Ascending aorta (tissue), 2 donors: ENCODE measurements at regions of chr3 and their contacts with region 1.

Region 1: GRCh38 chr3:100260685-100261484 is at the start of gene TBC1D23:
- DNase-seq: peak; percentile 97 to 99
- H3K4me3 ChIP-seq: peak within 1 kb of the TSS; percentile 80 to 88
- H3K27ac ChIP-seq: peak within 1 kb of the TSS; percentile 95 to 97
- H3K4me1 ChIP-seq: peaks cover 3 to 14% of the 10 kb centered on the region in 2 donors
- H3K27me3 ChIP-seq: no peaks in the 10 kb centered on the region
- CTCF ChIP-seq: no peak
- total RNA-seq, gene TBC1D23: 56.9 TPM

Region 2: DNA sequence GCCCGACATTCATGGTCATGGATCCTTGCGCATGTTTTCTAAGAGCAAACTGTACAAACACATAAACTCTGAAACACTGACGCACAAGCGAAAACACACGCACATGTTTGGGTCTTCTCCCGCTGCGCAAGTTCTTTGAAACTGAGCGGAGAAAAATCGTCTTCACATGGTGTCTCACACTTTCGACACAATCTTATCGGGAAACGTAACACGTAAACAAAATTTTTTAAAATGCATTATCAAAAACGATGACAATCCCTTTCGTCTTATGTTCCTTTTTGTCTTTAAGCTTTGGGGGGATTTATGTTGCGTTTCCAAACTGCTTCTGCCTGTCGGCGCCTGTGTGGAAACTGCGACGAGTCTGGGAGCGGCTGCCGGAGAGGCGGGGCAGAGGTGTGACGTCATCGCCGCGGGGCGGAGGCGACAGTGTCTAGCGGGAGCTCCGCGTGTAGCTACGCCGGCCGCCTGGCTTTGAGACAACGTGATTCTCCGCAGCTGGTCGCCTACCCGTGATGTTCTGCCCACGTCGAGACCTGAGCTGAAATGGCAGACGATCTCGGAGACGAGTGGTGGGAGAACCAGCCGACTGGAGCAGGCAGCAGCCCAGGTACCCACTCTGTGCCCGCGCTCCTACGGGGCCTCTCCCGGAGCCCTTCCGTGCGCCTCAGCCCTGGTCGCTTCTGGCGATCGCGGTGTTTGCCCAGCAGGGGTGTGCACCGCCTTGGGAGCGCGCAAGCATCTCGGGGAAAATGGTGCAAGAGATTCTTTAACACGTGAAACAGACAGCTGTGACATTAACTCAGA is 443.2 kb before region 1 on chr3 and contains the start of gene CMSS1:
- intact Hi-C with region 1: loop called (anchors 5 kb)
- DNase-seq: peak; percentile 55 to 96
- H3K4me3 ChIP-seq: peak within 1 kb of the TSS; percentile 71 to 79
- H3K27ac ChIP-seq: peak within 1 kb of the TSS; percentile 90
- H3K4me1 ChIP-seq: peaks cover 0 to 19% of the 10 kb centered on the region in 2 donors
- H3K27me3 ChIP-seq: no peaks in the 10 kb centered on the region
- CTCF ChIP-seq: peak; percentile 15 to 52 (median 38)
- total RNA-seq, gene CMSS1: 9.2 TPM

Region 3: GRCh38 chr3:100352296-100353231 is 91.7 kb after region 1 on chr3:
- intact Hi-C with region 1: no loop called
- DNase-seq: no peak
- H3K4me3 ChIP-seq: no peak overlapping the region
- H3K27ac ChIP-seq: no peak overlapping the region
- H3K4me1 ChIP-seq: no peaks in the 10 kb centered on the region
- H3K27me3 ChIP-seq: no peaks in the 10 kb centered on the region
- CTCF ChIP-seq: no peak

Region 4: DNA sequence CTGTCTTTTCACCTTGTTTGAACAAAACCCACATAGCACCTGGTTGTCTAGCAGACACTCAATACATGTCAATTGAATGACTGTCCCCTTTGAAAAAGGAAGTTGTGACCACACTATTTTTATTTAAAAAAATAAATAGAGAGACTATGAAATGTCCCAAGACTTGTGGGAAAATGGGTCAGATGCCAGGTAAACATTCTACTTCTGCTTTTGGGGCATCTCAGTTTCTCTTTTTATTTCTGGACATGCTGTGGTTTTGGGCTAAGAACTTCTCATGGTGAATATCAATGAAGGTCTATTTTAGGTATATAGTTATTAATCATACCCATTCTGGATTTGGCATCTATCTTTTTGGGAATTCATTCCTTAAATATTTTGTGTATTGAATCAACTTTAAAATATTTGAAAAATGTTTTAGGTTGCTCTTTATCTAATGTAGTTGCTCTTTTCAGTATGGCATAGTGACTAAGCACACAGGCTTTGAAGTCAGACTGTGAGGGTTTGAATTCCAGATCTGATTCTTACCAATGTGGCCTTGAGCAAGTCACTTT is 235.9 kb after region 1 on chr3:
- intact Hi-C with region 1: no loop called
- DNase-seq: no peak
- H3K4me3 ChIP-seq: no peak overlapping the region
- H3K27ac ChIP-seq: no peak overlapping the region
- H3K4me1 ChIP-seq: peaks cover 0 to 5% of the 10 kb centered on the region in 2 donors
- H3K27me3 ChIP-seq: no peaks in the 10 kb centered on the region
- CTCF ChIP-seq: no peak